HepG2 (cell line): ENCODE measurements at regions of chr1 and their contacts with region 1.

Region 1: DNA sequence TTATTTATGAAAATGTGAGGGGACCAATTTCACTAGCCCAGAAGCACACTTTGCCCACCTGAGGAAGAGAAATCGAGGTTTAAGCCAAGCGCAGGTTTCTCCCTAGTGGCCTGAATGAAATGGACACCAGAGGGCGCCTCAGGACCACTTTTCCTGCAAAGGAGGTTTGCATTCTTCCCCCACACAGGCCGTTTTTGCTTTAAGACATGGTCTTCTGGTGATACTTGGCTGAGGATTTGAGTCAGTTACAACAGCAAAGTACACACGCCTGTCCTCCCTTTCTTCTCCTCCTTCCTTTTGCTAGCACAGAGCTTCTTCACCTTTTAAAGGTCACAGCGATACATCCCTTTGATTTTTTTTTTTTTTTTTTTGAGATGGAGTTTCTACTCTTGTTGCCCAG is 5.4 kb downstream of the PLA2G2E start:
- DNase-seq: peak; percentile 74
- ATAC-seq: peak; percentile 67
- H3K4me3 ChIP-seq: no peak overlapping the region
- H3K27ac ChIP-seq: no peak overlapping the region
- H3K4me1 ChIP-seq: peaks cover 43% of the 10 kb centered on the region
- H3K27me3 ChIP-seq: no peaks in the 10 kb centered on the region
- CTCF ChIP-seq: peak; percentile 93
- EP300 ChIP-seq: no peak
- POLR2A ChIP-seq: no peak
- RAD21 ChIP-seq: peak; percentile 91

Region 2: DNA sequence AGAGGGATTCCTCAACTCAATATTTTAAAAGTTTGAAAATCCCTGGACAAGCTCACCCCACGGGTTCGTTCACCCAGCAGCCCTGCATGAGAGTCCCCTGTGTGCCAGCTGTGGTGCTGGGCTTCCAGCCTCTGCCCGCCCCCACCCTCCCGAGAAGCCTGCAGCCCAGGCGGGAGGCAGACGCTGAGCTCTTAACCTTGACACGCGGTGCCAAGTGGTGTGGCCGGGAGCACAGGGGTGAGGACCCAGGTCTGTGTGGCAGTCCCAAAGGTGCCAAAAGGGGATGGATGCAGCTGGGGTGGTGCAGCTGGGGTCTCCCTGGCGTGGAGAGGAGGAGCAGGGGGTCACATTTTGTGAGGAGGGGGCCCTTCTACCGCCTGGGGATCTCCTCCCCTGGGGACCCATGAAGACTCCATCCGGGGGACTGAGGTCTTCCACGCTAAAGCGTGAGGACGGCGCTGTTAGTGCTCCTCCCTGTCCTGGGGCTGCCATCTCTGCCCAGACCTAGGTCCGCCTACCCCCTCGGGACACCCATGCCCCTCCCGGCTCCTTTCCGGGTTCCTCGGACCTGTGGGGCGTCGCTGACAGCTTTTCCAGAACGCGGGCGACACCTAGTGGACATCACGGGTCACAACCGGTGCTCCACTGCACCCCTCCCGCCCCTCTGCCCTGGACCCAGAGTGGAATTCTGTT is 234.0 kb after region 1 on chr1:
- CTCF ChIA-PET with region 1: interaction called, 30 read pairs
- POLR2A ChIA-PET with region 1: interaction called, 3 read pairs
- in situ Hi-C with region 1: loop called (anchors 5 kb)
- intact Hi-C with region 1: loop called (anchors 1 kb)
- DNase-seq: peak; percentile 60
- ATAC-seq: peak; percentile 92
- H3K4me3 ChIP-seq: peak overlapping the region in 1 of 3 experiments; percentile 54; a peak in 1 of 6 replicates
- H3K27ac ChIP-seq: no peak overlapping the region
- H3K4me1 ChIP-seq: peaks cover 17% of the 10 kb centered on the region
- H3K27me3 ChIP-seq: peaks cover 0 to 1% of the 10 kb centered on the region in 2 experiments; a peak in 1 of 5 replicates
- CTCF ChIP-seq: peak; percentile 98
- EP300 ChIP-seq: no peak
- POLR2A ChIP-seq: no peak
- RAD21 ChIP-seq: peak; percentile 96

Region 3: DNA sequence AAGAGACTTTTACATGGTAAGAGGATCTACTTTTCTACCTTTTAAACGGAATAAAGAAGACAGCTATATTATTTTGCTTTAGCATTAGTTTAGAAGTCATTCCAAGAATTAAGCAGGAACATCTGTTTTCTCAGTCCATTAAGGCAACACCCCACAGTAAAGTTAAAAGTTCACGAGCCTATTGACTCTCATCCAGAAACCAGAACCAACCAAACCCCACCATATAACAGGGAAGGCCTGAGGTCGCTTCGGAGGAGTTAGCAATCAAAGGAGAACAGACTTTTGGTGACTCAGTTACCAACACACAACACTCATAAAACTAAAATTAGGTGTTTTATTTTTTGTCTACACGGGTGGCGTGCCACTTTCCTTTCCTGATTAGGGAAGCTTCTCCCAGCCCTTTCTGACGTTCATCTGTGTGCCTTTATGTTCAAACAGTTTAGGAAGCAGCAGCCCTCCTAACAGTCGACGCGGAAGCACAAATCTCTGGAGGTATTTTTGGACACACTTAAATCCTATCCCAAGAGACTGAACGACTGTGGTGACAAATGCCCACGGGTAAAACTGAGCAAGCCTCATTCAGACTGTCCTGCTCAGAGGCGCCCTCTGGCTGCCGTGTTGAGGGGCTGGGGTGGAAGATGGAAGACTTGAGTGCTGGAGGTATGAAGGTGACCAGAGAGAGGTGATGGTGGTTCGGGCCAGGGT is 276.9 kb after region 1 on chr1:
- CTCF ChIA-PET with region 1: interaction called, 32 read pairs
- POLR2A ChIA-PET with region 1: no interaction called
- in situ Hi-C with region 1: no loop called
- intact Hi-C with region 1: loop called (anchors 1 kb)
- DNase-seq: peak; percentile 44
- ATAC-seq: peak; percentile 81
- H3K4me3 ChIP-seq: no peak overlapping the region
- H3K27ac ChIP-seq: no peak overlapping the region
- H3K4me1 ChIP-seq: peaks cover 5% of the 10 kb centered on the region; the same call in 1 of the 2 replicates
- H3K27me3 ChIP-seq: peaks cover 3 to 28% of the 10 kb centered on the region in 2 experiments; a peak in 4 of 5 replicates
- CTCF ChIP-seq: peak; percentile 80
- EP300 ChIP-seq: no peak
- POLR2A ChIP-seq: no peak
- RAD21 ChIP-seq: peak; percentile 52; the same call in 1 of the 2 replicates